CD4-positive, alpha-beta T cell (primary cell): ENCODE measurements at regions of chr11 and their contacts with region 1.

Region 1: DNA sequence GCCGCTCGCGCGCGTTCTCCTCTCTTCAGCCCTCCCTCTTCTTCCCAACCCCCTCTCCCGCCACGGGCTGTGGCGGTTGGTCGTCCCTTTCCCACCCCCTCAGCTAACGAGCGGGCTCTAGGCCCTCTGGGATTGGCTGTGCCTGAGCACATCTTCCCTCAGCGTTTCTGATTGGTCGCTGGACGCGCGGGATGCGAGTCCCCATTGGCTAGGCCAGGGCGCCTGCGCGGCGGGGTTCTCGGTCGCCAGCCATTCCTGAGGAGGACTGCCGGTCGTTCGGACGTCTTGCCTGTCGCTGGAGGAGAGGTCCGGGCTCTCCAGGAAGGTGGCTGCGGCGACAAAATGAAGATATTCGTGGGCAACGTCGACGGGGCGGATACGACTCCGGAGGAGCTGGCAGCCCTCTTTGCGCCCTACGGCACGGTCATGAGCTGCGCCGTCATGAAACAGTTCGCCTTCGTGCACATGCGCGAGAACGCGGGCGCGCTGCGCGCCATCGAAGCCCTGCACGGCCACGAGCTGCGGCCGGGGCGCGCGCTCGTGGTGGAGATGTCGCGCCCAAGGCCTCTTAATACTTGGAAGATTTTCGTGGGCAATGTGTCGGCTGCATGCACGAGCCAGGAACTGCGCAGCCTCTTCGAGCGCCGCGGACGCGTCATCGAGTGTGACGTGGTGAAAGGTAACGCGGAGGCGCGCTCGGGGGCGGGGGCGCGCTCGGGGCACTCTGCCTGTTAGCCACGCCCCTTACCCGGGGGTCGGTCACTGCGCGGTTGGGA is at the start of gene RBM14:
- DNase-seq: peak; percentile 95 to 100 (median 97)
- ATAC-seq: peak; percentile 81
- H3K4me3 ChIP-seq: peak within 1 kb of the TSS; percentile 99
- H3K4me3 Mint-ChIP-seq: peak within 1 kb of the TSS; percentile 99
- H3K27ac ChIP-seq: peak within 1 kb of the TSS; percentile 96 to 98
- H3K27ac Mint-ChIP-seq: peak within 1 kb of the TSS; percentile 94
- H3K4me1 ChIP-seq: peaks cover 50% of the 10 kb centered on the region
- H3K4me1 Mint-ChIP-seq: peaks cover 53% of the 10 kb centered on the region
- H3K27me3 ChIP-seq: no peaks in the 10 kb centered on the region
- H3K27me3 Mint-ChIP-seq: no peaks in the 10 kb centered on the region
- CTCF ChIP-seq: no peak
- total RNA-seq, gene RBM14: 239 to 250 TPM

Region 2: DNA sequence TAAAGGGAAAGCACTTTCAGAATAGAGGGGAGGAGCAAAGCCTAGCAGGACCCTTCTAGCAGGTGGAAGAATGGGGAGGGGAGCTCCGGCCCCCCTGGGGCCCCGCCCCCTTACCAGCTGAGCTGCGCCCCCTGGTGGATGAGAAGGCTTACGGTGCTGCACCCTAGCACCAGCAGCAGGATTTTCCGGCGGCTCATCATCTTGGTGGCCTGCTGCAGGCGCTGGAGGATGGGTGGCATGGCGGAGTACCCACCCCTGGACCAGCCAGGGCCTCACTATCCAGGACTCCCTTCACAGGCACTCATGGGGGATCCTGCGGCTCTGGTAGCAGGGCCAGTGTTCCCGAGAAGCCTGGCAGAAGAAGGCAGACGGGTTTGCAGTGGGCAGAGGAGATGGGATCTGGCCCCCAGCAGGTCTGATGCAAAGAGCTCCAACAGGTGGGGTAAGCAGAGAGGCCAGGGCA is 571.4 kb before region 1 on chr11:
- CTCF ChIA-PET with region 1: no interaction called
- POLR2A ChIA-PET with region 1: no interaction called
- intact Hi-C with region 1: no loop called
- DNase-seq: peak; percentile 72 to 92 (median 82)
- ATAC-seq: peak; percentile 98
- H3K4me3 ChIP-seq: no peak overlapping the region
- H3K4me3 Mint-ChIP-seq: no peak overlapping the region
- H3K27ac ChIP-seq: no peak overlapping the region
- H3K27ac Mint-ChIP-seq: no peak overlapping the region
- H3K4me1 ChIP-seq: peaks cover 26% of the 10 kb centered on the region
- H3K4me1 Mint-ChIP-seq: peaks cover 17% of the 10 kb centered on the region
- H3K27me3 ChIP-seq: no peaks in the 10 kb centered on the region
- H3K27me3 Mint-ChIP-seq: peaks cover 5% of the 10 kb centered on the region
- CTCF ChIP-seq: peak; percentile 91

Region 3: GRCh38 chr11:66258473-66258893 is 358.1 kb before region 1 on chr11:
- CTCF ChIA-PET with region 1: no interaction called
- POLR2A ChIA-PET with region 1: no interaction called
- intact Hi-C with region 1: no loop called
- DNase-seq: no peak
- ATAC-seq: no peak
- H3K4me3 ChIP-seq: peak overlapping the region; percentile 97
- H3K4me3 Mint-ChIP-seq: peak overlapping the region; percentile 93
- H3K27ac ChIP-seq: peak overlapping the region; percentile 96 to 99
- H3K27ac Mint-ChIP-seq: peak overlapping the region; percentile 96
- H3K4me1 ChIP-seq: peaks cover 31% of the 10 kb centered on the region
- H3K4me1 Mint-ChIP-seq: peaks cover 30% of the 10 kb centered on the region
- H3K27me3 ChIP-seq: no peaks in the 10 kb centered on the region
- H3K27me3 Mint-ChIP-seq: no peaks in the 10 kb centered on the region
- CTCF ChIP-seq: peak; percentile 17

Region 4: DNA sequence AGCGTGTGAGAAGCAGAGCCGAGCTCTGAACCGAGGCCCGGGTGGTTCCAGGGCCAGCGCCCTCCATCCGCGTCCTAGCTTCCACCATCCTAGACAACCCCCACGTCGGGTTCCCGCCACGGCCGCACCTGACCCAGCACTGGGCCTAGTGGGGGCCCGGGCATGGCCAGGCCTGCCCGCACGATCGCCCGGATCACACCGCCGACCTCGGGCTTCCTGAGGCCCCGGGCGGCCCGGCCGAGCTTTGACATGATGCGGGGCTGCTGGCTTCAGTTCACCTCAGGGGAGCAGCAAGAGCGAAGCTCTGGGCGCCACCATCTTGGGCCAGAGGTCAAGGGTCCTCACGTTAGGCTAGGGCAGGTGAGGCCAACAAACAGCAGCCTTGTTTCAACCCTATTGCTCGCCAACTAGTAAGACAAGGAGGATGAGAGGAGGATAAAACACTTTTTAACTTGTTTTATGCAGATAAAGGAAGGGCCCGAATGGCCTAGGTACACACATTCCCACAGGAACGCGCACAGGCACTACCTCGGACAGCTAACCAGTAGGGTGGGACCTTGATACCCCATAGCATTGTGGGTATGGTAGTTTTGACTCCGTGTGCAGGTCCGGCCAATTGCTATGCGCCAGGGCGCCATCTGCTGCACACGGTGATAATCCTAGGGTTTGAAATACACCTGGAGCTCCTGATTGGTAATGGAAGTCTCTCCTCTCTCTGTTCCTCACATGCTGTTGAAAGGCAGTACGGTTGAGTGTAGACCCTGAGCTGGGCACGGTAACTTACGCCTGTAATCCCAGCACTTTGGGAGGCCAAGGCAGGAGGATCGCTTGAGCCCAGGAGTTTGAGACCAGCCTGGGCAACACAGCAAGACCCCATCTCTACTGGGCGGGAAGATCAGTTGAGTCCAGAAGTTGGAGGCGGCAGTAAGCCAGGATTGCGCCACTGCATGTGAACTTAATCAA is 177.8 kb before region 1 on chr11 and contains the start of gene MRPL11:
- CTCF ChIA-PET with region 1: interaction called, 4 read pairs
- POLR2A ChIA-PET with region 1: interaction called, 11 read pairs
- intact Hi-C with region 1: no loop called
- DNase-seq: peak; percentile 78 to 95 (median 86)
- ATAC-seq: peak; percentile 99
- H3K4me3 ChIP-seq: peak within 1 kb of the TSS; percentile 70
- H3K4me3 Mint-ChIP-seq: peak within 1 kb of the TSS; percentile 94
- H3K27ac ChIP-seq: peak within 1 kb of the TSS; percentile 67 to 89
- H3K27ac Mint-ChIP-seq: peak within 1 kb of the TSS; percentile 87
- H3K4me1 ChIP-seq: peaks cover 11% of the 10 kb centered on the region
- H3K4me1 Mint-ChIP-seq: peaks cover 13% of the 10 kb centered on the region
- H3K27me3 ChIP-seq: no peaks in the 10 kb centered on the region
- H3K27me3 Mint-ChIP-seq: peaks cover 3% of the 10 kb centered on the region
- CTCF ChIP-seq: peak; percentile 69
- total RNA-seq, gene MRPL11: 17.7 to 21.0 TPM

Region 5: DNA sequence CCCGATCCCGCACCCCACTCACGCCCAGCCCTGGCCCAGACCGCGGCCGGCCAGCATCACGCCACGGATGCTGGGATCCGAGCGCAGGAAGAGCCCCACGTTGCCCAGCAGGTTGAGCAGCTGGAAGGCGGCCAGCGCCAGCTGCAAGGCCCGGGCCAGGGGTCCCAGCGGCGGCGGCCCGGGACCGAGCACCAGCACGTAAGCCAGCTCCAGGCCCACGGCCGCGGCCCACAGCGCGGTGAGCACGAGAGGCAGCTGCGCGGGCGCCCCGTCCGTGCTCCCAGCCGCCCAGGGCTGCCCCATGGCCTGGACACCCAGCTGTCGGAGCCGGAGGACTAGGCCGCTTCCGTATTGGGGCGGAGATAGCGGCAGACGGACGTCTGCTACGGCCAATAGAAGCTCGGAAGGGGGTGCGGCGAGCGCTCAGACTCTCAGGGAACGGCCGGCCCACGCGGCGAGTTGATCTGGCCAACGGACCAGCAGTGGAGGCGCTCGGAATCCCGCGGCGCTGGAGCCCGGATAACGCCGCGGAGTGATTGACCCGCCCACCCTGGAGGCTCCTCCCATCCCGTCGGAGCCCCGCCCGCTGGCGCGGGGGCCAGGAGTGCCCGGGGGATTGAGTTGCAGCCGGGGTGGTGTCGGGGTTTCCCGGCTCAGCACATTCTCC is 70.7 kb before region 1 on chr11 and contains the start of gene ZDHHC24:
- CTCF ChIA-PET with region 1: no interaction called
- POLR2A ChIA-PET with region 1: interaction called, 19 read pairs
- intact Hi-C with region 1: no loop called
- DNase-seq: peak; percentile 59 to 92 (median 73)
- ATAC-seq: peak; percentile 82
- H3K4me3 ChIP-seq: peak within 1 kb of the TSS; percentile 76
- H3K4me3 Mint-ChIP-seq: peak within 1 kb of the TSS; percentile 90
- H3K27ac ChIP-seq: peak within 1 kb of the TSS; percentile 69 to 70
- H3K27ac Mint-ChIP-seq: peak within 1 kb of the TSS; percentile 75
- H3K4me1 ChIP-seq: peaks cover 44% of the 10 kb centered on the region
- H3K4me1 Mint-ChIP-seq: peaks cover 39% of the 10 kb centered on the region
- H3K27me3 ChIP-seq: no peaks in the 10 kb centered on the region
- H3K27me3 Mint-ChIP-seq: no peaks in the 10 kb centered on the region
- CTCF ChIP-seq: no peak
- total RNA-seq, gene ZDHHC24: 17.0 to 18.4 TPM

Region 6: DNA sequence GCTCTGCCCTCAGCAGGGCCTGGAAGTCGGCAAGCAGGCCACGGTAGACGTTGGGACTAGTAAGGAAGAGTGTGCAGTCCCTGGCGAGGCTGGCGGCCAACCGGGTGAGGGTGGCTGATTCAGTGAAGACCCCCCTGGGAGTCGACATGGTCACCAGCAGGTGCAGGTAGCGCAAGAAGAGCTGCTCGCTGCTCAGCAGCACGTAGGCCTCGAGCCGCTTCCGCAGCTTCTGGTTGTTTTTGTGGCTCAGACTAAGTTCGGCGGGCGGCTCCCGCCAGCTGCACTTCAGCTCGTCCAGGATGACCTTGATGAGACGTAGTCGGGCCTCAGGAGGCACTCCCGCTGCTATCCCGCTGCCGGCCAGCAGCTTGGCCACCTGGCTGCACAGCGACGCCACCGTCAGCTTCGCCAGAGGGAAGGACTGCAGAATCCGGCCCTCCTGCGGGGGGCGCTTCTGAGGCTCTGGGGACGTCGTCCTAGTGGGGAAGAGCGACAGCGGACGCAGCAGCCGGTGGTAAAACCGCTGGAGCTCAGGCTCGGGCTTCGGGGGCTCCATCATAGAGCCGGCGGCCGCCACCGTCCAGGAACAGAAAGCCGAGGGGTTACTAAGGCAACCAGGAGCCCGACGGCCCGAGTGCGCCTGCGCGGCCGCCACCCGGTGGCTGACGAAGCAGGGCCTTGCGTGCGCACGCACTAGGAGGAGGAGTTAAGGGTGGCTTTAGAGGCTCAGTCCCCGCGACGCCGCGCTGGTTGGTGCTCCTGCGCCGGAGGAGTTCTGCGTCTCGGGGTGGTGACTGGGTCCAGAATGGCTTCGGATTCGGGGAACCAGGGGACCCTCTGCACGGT is 23.9 kb before region 1 on chr11 and contains the starts of genes CCDC87 and CCS:
- CTCF ChIA-PET with region 1: interaction called, 19 read pairs
- POLR2A ChIA-PET with region 1: interaction called, 42 read pairs
- intact Hi-C with region 1: loop called (anchors 1 kb)
- DNase-seq: peak; percentile 98 to 100 (median 99)
- ATAC-seq: peak; percentile 99
- H3K4me3 ChIP-seq: peak within 1 kb of the TSS; percentile 79
- H3K4me3 Mint-ChIP-seq: peak within 1 kb of the TSS; percentile 98
- H3K27ac ChIP-seq: peak within 1 kb of the TSS; percentile 58 to 81
- H3K27ac Mint-ChIP-seq: peak within 1 kb of the TSS; percentile 85
- H3K4me1 ChIP-seq: peaks cover 39% of the 10 kb centered on the region
- H3K4me1 Mint-ChIP-seq: peaks cover 23% of the 10 kb centered on the region
- H3K27me3 ChIP-seq: no peaks in the 10 kb centered on the region
- H3K27me3 Mint-ChIP-seq: no peaks in the 10 kb centered on the region
- CTCF ChIP-seq: peak; percentile 55
- total RNA-seq, gene CCDC87: 0.22 to 0.25 TPM
- total RNA-seq, gene CCS: 25.4 to 26.3 TPM

Region 7: GRCh38 chr11:66842896-66843775 is 226.6 kb after region 1 on chr11 and contains the start of gene RCE1:
- CTCF ChIA-PET with region 1: no interaction called
- POLR2A ChIA-PET with region 1: interaction called, 10 read pairs
- intact Hi-C with region 1: no loop called
- DNase-seq: peak; percentile 80 to 98 (median 90)
- ATAC-seq: peak; percentile 82
- H3K4me3 ChIP-seq: peak within 1 kb of the TSS; percentile 96
- H3K4me3 Mint-ChIP-seq: peak within 1 kb of the TSS; percentile 94
- H3K27ac ChIP-seq: peak within 1 kb of the TSS; percentile 97 to 99
- H3K27ac Mint-ChIP-seq: peak within 1 kb of the TSS; percentile 96
- H3K4me1 ChIP-seq: peaks cover 49% of the 10 kb centered on the region
- H3K4me1 Mint-ChIP-seq: peaks cover 52% of the 10 kb centered on the region
- H3K27me3 ChIP-seq: no peaks in the 10 kb centered on the region
- H3K27me3 Mint-ChIP-seq: no peaks in the 10 kb centered on the region
- CTCF ChIP-seq: no peak
- total RNA-seq, gene RCE1: 60.1 to 63.0 TPM